H1 (cell line): ENCODE measurements at regions of chr5 and their contacts with region 1.

Region 1: DNA sequence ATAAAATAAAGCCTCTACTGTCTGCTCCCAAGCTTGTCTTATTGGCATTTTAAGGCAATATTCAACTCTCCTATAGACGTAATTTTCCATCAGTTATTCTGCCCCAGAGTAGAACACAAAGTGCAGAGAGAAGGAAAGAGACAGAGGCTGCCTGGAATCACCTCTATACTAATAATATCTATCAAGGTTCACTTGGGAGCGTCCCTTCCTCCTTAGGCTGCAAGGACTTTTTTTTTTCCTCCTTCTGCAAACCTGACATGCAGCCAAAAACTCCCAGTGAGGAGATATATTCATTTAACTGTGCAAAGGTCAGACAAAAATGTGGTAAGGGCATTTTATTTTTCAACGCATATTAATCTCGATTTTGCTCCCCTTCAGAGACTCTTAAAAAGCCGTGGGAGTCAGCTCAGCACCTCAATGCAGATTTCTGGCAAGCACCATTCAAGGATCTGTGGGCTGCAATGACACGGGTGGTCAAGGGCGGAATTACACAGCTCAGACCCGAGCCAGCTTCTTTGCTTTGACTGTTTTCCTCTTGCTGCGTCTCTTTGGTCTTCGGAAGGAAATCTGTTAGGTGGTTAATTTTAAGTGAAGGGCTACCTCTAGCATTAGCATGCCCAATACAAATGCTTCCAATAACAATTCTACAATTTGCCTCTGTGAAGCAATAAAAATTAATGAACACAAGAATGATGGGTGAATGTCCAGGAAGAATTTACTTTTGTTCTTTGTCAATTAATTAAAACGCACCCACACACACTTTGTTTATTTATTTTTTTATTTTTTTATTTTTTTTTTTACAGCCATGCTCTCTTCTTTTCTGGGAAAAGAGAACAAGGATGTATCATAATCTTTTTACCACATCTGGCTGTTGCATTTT is 587.7 kb upstream of the GRAMD2B start:
- DNase-seq: peak; percentile 47 to 52
- H3K4me3 ChIP-seq: no peak overlapping the region
- H3K27ac ChIP-seq: no peak overlapping the region
- H3K4me1 ChIP-seq: peaks cover 0 to 9% (median 6%) of the 10 kb centered on the region in 4 experiments; a peak in 4 of 7 replicates
- H3K27me3 ChIP-seq: no peaks in the 10 kb centered on the region
- CTCF ChIP-seq: peak; percentile 53 to 80 (median 71)
- EP300 ChIP-seq: no peak
- POLR2A ChIP-seq: no peak
- RAD21 ChIP-seq: peak; percentile 82 to 85

Region 2: DNA sequence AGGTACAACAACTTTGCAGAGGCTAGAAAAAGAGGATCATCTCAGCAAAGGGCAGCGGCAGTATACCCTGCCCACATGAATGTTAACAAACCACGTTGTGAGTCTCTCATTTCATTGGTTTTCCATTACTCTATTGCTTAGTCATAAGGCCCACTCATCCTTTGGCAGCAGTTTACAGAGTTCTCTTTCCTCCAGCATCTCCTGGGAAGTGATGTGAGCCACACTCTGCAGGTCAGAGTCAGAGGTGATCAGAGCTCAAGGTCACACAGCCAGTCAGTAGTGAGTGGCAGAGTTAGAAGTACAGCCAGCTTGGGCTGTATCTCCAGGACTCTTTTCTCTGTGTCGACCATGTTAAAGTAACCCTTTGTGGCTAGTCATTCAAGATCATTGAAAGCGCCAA is 12.0 kb before region 1 on chr5:
- CTCF ChIA-PET with region 1: interaction called, 13 read pairs
- POLR2A ChIA-PET with region 1: no interaction called
- DNase-seq: no peak
- H3K4me3 ChIP-seq: no peak overlapping the region
- H3K27ac ChIP-seq: no peak overlapping the region
- H3K4me1 ChIP-seq: no peaks in the 10 kb centered on the region
- H3K27me3 ChIP-seq: no peaks in the 10 kb centered on the region; a peak in 1 of 7 replicates
- CTCF ChIP-seq: no peak
- EP300 ChIP-seq: no peak
- POLR2A ChIP-seq: no peak
- RAD21 ChIP-seq: no peak